Aorta (tissue), 5 donors: ENCODE measurements at regions of chr6 and their contacts with region 1.

Region 1: DNA sequence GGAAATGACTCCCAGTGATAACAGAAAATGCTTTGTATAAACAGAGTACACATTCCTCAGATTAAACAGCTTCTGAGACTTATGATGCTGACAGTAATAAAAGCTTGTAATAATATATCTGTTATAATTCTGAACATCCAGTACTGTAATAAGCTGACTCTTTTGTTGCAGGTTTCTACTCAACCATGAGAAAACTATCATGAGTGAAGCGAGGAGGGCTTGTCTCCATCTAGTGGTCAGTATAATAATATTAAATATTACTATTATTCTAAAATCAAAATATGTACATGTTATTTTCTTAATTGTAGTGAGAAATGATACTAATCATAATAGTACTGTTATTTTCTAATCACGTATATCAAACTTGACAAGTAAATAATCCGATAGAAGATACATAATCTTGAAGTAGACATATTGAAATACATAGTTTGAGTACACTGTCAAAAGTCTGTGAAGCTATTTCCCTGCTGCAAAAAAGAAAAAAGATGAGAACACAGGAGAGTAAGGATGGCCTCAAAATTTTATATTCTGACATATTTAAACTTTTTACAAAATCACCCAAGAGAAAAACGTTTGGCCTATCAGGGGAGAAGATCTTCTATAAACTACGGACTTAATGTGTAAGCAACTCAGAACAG is 183.1 kb downstream of the MOXD1 start:
- DNase-seq: no peak
- ATAC-seq: no peak
- H3K4me3 ChIP-seq: no peak overlapping the region
- H3K27ac ChIP-seq: no peak overlapping the region
- H3K4me1 ChIP-seq: no peaks in the 10 kb centered on the region
- H3K27me3 ChIP-seq: no peaks in the 10 kb centered on the region

Region 2: DNA sequence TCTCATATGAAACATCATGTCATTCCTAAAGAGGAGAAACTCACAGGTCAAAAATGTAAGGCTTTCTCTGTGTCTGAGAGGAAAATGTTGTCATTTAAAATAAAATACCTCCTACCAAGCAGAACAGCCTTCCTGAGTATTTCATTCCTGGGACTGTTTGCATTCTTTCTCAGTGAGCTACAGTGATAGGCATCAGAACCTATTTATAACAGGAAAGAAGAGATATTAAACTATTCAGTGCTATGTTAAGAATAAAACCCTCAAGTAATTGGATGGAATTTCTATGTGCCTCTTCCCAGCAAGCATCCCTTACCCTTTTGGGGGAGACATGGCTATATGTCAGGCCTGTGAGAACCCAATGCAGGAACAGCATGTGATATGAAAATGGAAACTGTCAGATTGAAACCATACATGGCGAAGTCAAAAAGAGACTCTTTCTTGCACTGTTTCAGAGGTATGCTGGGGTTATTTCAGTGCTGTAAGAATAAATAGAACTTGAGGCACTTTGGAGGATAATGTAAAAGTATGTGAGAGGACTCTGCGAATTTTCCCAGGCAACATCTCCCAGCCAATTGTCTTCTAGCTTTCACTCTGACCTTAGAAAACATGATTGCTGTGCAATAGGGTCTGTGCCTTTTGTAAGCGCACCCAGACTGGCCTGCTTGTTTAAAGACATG is 133.2 kb before region 1 on chr6:
- intact Hi-C with region 1: loop called in 1 of 2 experiments (anchors 5 kb)
- DNase-seq: no peak
- ATAC-seq: peak; percentile 77
- H3K4me3 ChIP-seq: no peak overlapping the region
- H3K27ac ChIP-seq: peak overlapping the region; percentile 83 to 97
- H3K4me1 ChIP-seq: peaks cover 0 to 4% of the 10 kb centered on the region in 2 donors
- H3K27me3 ChIP-seq: no peaks in the 10 kb centered on the region

Region 3: DNA sequence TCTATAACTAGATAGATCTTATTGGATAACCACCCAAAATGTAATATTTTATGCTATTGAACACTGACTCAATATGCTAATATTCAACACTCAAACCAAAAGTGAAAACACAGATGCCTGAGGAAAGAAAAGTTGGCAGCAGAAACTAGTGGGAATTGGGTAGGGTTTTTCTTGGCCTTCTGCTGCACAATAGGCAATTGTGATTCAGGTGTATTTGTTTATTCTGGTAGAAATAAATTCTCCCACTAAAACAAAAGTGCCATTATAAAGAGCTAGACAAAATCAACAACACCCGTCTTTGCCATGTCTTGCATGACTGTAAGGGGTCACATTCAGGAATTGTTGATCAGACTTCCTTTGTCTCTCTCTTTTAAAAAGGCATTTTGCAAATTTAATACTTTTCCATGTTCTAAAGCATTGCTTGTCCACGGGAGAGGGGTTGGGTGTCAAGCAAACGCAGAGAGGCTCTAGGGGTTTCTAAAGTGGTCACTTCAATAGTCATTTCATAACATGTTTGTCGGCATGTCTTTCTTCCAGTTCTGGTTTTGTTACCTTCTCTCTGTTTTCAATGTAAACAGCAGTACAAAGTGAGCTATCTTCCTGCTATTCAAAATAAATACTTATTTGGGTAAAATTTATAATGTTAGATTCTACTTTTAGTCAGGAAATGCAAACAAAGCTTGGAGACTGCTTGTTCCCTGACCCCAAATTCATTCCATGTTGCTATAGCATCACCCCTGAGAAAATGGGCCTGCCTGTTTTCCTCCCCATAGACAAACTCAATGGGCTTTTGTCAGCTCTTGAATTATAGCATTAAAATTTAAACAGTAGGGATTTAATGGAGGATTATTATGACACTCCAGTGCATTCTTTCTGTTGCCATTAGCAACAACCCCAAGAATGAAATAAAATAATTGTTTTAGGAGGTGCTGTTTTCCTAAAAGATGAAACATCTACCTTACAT is 50.0 kb before region 1 on chr6:
- intact Hi-C with region 1: loop called in 1 of 2 experiments (anchors 2 kb)
- DNase-seq: no peak
- ATAC-seq: no peak
- H3K4me3 ChIP-seq: no peak overlapping the region
- H3K27ac ChIP-seq: peak overlapping the region in 1 of 2 donors; percentile 57
- H3K4me1 ChIP-seq: peaks cover 3 to 6% of the 10 kb centered on the region in 2 donors
- H3K27me3 ChIP-seq: no peaks in the 10 kb centered on the region